GM10248 (cell line): ENCODE measurements at regions of chr9 and their contacts with region 1.

Region 1: DNA sequence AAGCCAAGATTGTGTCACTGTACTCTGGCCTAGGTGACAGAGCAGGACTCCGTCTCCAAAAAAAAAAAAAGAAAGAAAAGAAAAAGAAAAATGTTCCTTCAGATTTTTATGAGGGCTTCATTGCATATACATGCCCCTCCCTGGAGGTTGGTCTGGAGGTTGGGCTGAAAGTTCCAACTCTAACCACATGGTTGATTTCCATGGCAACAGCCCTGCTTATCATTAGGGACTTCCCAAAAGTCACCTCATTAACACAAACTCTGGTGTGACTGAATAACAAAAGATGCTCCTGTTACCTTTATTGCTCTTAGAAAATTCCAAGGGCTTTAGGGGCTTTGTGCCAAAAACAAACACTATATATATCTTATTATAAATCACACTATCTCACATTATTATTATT is 113.8 kb downstream of the TMC1 start:
- DNase-seq: peak; percentile 32
- CTCF ChIP-seq: no peak

Region 2: DNA sequence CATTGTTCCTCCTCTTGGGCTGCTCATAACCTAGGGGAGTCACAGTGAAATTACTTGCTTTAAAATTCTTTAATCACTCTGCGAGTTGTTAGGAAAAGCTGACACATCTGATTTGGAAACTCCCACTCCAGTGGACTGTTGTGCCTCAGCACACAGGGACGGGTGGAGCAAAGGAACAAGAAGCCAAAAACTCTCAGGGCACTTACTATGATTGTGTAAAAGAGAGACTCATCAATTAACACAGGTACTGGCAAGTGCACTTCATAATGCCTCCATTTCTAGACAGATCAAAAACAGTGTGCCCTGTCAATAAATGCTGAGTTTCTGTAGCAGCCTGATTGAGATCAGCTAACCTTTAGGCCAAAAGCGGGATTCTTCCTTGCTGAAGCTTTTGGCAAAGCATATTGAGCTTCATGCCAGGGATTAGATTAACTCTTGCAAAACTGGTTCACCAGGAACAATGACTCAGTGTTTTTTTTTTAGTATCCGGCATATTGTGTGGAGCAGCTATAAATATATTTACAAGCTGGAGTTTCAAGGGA is 57.9 kb before region 1 on chr9:
- CTCF ChIA-PET with region 1: no interaction called
- POLR2A ChIA-PET with region 1: no interaction called
- DNase-seq: no peak
- CTCF ChIP-seq: no peak

Region 3: DNA sequence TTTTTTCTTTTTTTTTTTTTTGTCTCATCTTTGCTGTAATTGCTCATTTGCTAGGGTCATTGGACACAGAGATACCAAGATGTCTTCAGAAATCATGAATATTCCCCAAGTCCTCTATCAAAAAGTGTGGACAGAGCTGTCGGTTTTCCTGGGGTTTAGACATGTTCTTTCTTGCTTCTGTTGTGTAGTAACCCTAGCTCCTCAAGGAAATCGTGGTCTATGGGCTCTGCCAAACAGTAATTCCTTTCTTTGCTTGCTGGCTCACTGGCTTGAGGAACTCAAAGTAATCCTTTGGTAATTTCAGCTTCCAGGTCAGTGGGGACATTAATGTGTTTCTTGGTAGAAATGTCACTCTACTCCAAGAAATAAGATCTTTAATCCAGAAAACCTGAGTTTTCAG is 12.0 kb before region 1 on chr9:
- CTCF ChIA-PET with region 1: interaction called, 19 read pairs
- POLR2A ChIA-PET with region 1: no interaction called
- DNase-seq: no peak
- CTCF ChIP-seq: no peak